ENCODE measurements at regions of chr12 and their contacts with region 1.

Region 1: DNA sequence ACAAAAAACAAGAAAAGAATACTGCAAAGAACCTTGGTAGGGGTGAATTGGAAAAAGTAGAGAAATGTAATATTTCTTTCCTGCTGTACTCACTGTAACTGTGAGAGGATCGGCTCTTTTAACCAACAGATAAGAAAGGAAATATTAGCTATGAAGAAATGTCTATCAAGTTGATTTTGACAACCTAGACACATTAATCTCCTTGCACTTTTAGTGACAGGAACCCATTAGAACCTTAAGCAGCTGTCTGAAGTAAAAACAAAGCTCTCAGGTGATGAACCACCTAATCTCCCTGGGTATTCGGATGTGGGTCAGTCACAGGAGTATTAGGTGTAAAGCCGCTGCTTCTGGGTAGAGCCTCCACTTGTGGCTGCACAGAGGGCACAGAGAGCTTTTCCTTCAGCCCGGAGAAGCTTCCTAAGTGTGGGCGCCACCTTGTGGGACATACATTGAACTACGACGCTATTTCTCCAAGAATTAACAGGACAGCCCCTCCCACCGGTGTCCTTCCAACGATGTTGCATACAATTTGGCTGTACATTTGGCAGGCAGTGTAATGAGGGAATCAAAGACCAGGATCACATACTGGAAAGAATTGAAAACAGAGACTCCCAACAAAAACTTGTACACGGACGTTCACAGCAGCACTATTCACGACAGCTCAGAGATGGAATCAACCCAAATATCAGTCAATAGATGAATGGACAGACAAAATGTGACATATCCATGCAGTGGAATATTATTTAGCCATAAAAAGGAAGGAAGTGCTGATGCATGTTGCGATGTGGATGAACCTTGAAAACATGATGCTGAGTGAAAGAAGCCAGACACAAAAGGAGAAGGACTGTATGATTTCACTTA is 28.9 kb upstream of the MAPKAPK5 start:
- DNase-seq: peak; percentile 86
- H3K4me3 ChIP-seq: no peak overlapping the region
- H3K27ac ChIP-seq: no peak overlapping the region
- H3K4me1 ChIP-seq: no peaks in the 10 kb centered on the region
- H3K27me3 ChIP-seq: peaks cover 2 to 3% of the 10 kb centered on the region in 2 experiments
- CTCF ChIP-seq: peak; percentile 76 to 78
- POLR2A ChIP-seq: no peak

Region 2: DNA sequence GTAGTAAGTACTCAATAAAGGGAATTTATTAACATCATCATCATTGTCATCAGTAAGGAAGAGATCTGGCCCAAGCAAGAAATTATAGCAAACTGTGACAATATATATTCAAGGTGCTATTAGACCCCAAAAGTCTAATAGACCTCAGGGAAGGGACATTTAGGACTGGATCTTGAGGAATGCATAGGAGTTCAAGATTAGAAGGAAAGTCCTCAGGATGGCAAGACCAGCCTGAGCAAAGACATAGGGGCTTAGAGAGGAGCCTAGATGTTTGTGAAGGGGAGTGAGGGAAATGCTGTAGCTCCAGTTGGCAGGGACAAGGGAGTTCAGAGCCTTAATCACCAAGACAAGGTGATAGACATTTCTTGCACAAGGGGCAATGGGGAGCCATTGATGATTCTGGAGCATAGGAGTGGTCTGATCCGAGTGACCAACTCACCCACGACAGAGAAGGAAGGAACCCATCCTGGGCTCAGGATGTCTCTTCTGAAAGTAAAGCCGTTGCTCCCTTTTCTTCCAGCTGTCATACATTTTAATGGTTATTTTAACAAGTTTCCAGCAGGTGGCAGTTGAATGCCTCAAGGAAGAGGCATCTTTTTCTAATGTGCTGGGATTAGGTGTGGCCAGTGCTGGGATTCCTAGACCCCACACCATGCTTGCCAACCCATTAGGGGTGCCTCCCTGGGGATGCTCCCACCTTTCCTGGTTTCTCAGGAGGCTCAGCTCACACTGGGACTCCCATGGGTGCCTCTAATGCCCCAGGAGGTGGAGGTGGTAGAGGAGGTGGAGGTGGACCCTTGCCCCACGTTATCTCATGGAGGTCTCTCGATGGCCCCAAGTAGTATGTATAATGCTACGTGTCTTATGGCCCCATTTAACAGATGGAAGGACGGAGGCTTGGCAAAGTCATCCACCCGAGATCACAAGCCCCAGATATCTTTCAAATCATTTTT is 482.0 kb before region 1 on chr12:
- CTCF ChIA-PET with region 1: interaction called, 10 read pairs
- POLR2A ChIA-PET with region 1: no interaction called
- dilution Hi-C with region 1: no loop called
- intact Hi-C with region 1: no loop called
- DNase-seq: peak; percentile 59
- H3K4me3 ChIP-seq: no peak overlapping the region
- H3K27ac ChIP-seq: no peak overlapping the region
- H3K4me1 ChIP-seq: no peaks in the 10 kb centered on the region
- H3K27me3 ChIP-seq: peaks cover 0 to 3% of the 10 kb centered on the region in 2 experiments
- CTCF ChIP-seq: peak; percentile 39 to 54
- POLR2A ChIP-seq: no peak

Region 3: GRCh38 chr12:111557271-111558106 is 255.6 kb before region 1 on chr12:
- CTCF ChIA-PET with region 1: no interaction called
- POLR2A ChIA-PET with region 1: no interaction called
- dilution Hi-C with region 1: no loop called
- intact Hi-C with region 1: no loop called
- DNase-seq: no peak
- H3K4me3 ChIP-seq: no peak overlapping the region
- H3K27ac ChIP-seq: peak overlapping the region; percentile 8
- H3K4me1 ChIP-seq: peaks cover 4% of the 10 kb centered on the region
- H3K27me3 ChIP-seq: no peaks in the 10 kb centered on the region
- CTCF ChIP-seq: no peak
- POLR2A ChIP-seq: no peak

Region 4: DNA sequence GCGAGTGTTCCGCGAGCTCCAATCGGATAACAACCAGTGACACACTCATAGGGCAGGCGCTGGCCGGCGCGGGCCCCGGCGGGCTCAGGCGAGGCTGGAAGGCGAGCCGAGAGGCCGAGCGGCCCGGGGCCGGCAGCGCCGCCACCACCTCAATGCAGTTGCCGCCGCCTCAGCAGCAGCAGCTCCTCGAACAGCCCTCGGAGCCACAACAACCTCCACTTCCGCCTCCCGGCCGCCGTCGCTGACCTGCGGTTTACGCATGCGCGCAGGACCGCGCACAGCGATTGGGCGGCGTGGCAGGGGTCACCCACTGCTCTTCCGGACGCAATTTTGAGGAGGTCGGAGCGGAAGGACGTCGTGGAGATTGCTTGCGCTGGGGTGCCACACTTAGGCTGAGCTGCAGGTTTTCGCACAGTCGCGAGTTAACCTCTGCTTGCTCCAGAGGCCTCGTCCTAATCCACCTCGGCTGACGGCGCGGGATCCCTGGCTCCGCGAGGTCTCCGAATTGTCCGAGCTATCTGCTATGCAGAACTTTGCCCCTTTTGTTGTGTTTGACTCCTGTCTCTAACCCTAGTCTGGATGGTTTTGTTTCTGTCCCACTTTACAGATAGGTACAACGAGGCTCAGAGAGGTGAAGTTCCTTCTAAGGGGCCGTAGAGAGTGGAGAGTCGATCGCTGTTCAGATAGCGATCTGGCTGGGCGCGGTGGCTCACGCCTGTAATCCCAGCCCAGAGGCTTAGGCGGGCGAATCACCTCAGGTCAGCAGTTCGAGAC is 127.2 kb before region 1 on chr12 and contains the starts of genes ACAD10 and BRAP:
- CTCF ChIA-PET with region 1: interaction called, 28 read pairs
- POLR2A ChIA-PET with region 1: no interaction called
- dilution Hi-C with region 1: loop called (anchors 25 kb)
- intact Hi-C with region 1: loop called (anchors 1 kb)
- DNase-seq: peak; percentile 98
- H3K4me3 ChIP-seq: peak within 1 kb of the TSS; percentile 47 to 85 (median 74)
- H3K27ac ChIP-seq: peak within 1 kb of the TSS; percentile 28
- H3K4me1 ChIP-seq: peaks cover 19% of the 10 kb centered on the region
- H3K27me3 ChIP-seq: no peaks in the 10 kb centered on the region
- CTCF ChIP-seq: no peak
- POLR2A ChIP-seq: peak; percentile 97
- total RNA-seq, gene ACAD10: 14.9 and 16.3 TPM in 2 replicates
- total RNA-seq, gene BRAP: 16.5 and 18.6 TPM in 2 replicates

Region 5: GRCh38 chr12:111741235-111741812 is 71.8 kb before region 1 on chr12:
- CTCF ChIA-PET with region 1: interaction called, 28 read pairs
- POLR2A ChIA-PET with region 1: interaction called, 3 read pairs
- dilution Hi-C with region 1: no loop called
- intact Hi-C with region 1: no loop called
- DNase-seq: peak; percentile 99
- H3K4me3 ChIP-seq: no peak overlapping the region
- H3K27ac ChIP-seq: peak overlapping the region; percentile 72
- H3K4me1 ChIP-seq: peaks cover 24% of the 10 kb centered on the region
- H3K27me3 ChIP-seq: no peaks in the 10 kb centered on the region
- CTCF ChIP-seq: no peak
- POLR2A ChIP-seq: peak; percentile 67

Region 6: DNA sequence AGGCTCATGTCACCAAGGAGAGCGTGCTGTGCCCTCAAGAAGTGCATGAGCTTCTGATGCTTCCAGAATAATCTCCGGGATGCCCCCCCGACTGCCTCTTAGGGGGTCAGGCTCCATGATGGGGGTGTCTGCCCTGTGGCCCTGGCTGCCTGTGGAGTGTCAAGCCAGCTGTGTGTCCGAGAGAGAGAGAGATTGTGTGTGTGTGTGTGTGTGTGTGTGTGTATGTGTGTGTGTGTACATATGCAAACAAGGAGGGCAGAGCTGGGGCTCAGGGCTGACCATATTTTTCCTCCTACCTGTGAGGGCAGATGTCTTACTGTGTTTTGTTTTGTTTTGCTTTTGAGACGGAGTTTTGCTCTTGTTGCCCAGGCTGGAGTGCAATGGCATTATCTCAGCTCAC is 52.0 kb before region 1 on chr12:
- CTCF ChIA-PET with region 1: interaction called, 262 read pairs
- POLR2A ChIA-PET with region 1: no interaction called
- dilution Hi-C with region 1: no loop called
- intact Hi-C with region 1: no loop called
- DNase-seq: no peak
- H3K4me3 ChIP-seq: no peak overlapping the region
- H3K27ac ChIP-seq: no peak overlapping the region
- H3K4me1 ChIP-seq: no peaks in the 10 kb centered on the region
- H3K27me3 ChIP-seq: peaks cover 0 to 3% of the 10 kb centered on the region in 2 experiments
- CTCF ChIP-seq: no peak
- POLR2A ChIP-seq: no peak

Region 7: GRCh38 chr12:111788178-111788654 is 24.9 kb before region 1 on chr12:
- CTCF ChIA-PET with region 1: interaction called, 18 read pairs
- POLR2A ChIA-PET with region 1: no interaction called
- dilution Hi-C with region 1: no loop called
- intact Hi-C with region 1: no loop called
- DNase-seq: no peak
- H3K4me3 ChIP-seq: no peak overlapping the region
- H3K27ac ChIP-seq: no peak overlapping the region
- H3K4me1 ChIP-seq: peaks cover 10% of the 10 kb centered on the region
- H3K27me3 ChIP-seq: no peaks in the 10 kb centered on the region
- CTCF ChIP-seq: peak; percentile 4 to 35
- POLR2A ChIP-seq: no peak